ENCODE measurements at regions of chr1 and their contacts with region 1.

Region 1: DNA sequence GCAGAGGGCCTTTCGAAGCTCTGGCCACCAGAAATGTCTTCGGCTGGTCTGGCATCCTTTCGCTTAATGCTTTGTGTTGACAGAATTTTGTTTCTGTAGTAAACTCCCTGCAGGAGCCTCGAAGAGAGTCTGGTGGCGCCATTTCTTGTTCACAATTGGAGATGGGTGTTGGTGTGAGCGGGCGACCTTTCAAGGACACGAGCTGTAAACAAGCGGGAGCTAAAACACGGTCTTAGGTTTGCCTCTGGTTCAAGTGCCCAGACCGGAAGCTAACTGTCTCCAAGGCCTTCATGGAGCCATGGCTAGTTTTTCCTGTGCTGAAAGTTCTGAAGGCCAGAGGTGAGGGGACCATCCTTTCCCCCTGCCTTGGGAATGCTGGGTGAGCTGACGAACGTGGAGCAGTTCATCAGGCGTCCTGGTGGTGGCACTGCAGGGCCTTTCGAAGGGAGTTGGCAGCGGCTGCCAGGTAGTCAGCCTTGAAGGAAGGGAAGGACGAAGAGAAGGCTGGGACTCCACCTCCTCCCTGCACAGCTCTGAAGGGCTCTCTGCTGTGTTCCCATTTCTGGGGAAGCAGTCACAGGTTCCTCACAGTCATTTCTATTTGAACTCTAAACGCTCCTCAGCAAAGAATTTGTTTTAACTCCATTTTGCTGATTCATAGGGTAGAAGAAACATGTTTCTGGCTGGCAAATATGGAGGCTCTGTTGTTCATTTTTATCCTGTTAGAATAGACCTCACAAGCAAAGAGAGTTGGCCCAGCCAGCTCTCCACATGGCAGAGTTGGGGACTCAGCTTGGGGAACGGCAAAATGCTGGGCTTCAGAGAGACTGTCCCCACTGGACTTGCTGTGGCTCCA is 35.2 kb downstream of the URB2 start:
- DNase-seq: peak; percentile 64 to 79
- ATAC-seq: peak; percentile 86 to 94
- H3K4me3 ChIP-seq: no peak overlapping the region
- H3K27ac ChIP-seq: peak overlapping the region in 1 of 4 donors; percentile 12
- H3K4me1 ChIP-seq: peaks cover 0 to 7% of the 10 kb centered on the region in 2 donors
- H3K27me3 ChIP-seq: no peaks in the 10 kb centered on the region
- CTCF ChIP-seq: peak; percentile 84 to 93 (median 86)
- POLR2A ChIP-seq: no peak

Region 2: DNA sequence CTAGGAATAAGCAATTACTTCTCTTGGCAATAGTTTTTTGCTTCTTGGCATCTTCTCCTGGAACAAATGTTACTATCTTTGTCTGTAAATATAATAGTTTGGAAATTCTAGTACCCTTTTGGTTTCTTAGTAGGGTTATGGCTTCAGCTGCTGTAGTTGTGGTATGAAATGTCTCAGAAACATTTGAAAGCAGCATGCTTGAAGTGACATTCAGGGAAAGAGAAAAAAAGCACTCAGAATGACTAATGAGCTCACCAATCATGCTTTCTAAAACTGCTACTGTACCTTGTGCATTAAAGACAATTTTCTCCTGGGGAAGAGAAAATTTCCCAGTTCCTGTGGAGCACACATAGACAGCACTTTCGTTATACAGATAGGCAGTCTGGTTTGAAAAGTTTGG is 174.1 kb before region 1 on chr1:
- in situ Hi-C with region 1: no loop called
- intact Hi-C with region 1: no loop called
- DNase-seq: no peak
- ATAC-seq: no peak
- H3K4me3 ChIP-seq: no peak overlapping the region
- H3K27ac ChIP-seq: no peak overlapping the region
- H3K4me1 ChIP-seq: no peaks in the 10 kb centered on the region
- H3K27me3 ChIP-seq: no peaks in the 10 kb centered on the region
- CTCF ChIP-seq: no peak
- POLR2A ChIP-seq: no peak

Region 3: DNA sequence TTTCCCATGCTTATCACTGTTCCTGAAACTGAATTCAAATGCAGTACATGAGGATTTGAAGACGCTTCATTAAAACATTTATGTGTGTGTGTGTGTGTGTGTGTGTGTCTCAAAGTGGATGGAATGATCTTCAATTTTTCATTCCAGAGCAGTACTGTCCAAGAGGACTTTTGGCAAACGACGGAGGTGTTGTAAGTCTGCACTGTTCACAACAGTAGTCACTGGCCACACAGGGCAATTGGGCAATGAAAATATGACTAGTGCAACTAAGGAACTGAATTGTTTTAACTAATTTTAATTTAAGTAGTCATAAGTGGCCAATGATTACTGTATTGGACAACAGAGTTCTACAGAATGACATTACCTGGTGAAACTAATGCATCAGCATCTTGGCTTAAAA is 40.4 kb before region 1 on chr1:
- in situ Hi-C with region 1: no loop called
- intact Hi-C with region 1: no loop called
- DNase-seq: peak; percentile 48 to 64
- ATAC-seq: peak; percentile 47 to 55
- H3K4me3 ChIP-seq: no peak overlapping the region
- H3K27ac ChIP-seq: peak overlapping the region in 3 of 4 donors; percentile 22 to 95 (median 37)
- H3K4me1 ChIP-seq: peaks cover 45 to 54% of the 10 kb centered on the region in 2 donors
- H3K27me3 ChIP-seq: no peaks in the 10 kb centered on the region
- CTCF ChIP-seq: no peak
- POLR2A ChIP-seq: no peak

Region 4: GRCh38 chr1:229714964-229715603 is 53.8 kb after region 1 on chr1:
- in situ Hi-C with region 1: no loop called
- intact Hi-C with region 1: no loop called
- DNase-seq: no peak
- ATAC-seq: no peak
- H3K4me3 ChIP-seq: no peak overlapping the region
- H3K27ac ChIP-seq: no peak overlapping the region
- H3K4me1 ChIP-seq: no peaks in the 10 kb centered on the region
- H3K27me3 ChIP-seq: no peaks in the 10 kb centered on the region
- CTCF ChIP-seq: no peak
- POLR2A ChIP-seq: no peak

Region 5: DNA sequence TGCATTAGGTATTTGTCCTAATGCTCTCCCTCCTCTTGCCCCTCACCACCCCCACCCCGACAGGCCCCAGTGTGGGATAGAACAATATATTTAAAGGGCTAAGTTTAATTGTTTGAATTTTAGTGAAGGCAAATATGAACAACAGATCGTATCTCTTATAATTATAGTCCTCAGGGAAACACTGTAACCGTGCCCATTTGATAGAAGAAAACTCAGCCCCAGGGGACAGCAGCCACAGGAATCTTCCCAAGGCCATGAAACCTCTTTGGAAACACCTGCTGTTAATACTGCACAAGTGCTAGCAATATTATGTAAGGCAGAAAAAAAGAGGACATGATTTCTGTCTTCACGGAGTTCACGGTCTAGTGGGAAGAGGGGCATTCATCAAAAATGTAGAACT is 107.0 kb after region 1 on chr1:
- in situ Hi-C with region 1: no loop called
- intact Hi-C with region 1: no loop called
- DNase-seq: no peak
- ATAC-seq: no peak
- H3K4me3 ChIP-seq: no peak overlapping the region
- H3K27ac ChIP-seq: no peak overlapping the region
- H3K4me1 ChIP-seq: no peaks in the 10 kb centered on the region
- H3K27me3 ChIP-seq: no peaks in the 10 kb centered on the region
- CTCF ChIP-seq: no peak
- POLR2A ChIP-seq: no peak

Region 6: GRCh38 chr1:229979993-229980392 is 318.7 kb after region 1 on chr1:
- in situ Hi-C with region 1: loop called in 1 of 4 experiments (anchors 25 kb)
- intact Hi-C with region 1: no loop called
- DNase-seq: no peak
- ATAC-seq: no peak
- H3K4me3 ChIP-seq: no peak overlapping the region
- H3K27ac ChIP-seq: no peak overlapping the region
- H3K4me1 ChIP-seq: no peaks in the 10 kb centered on the region
- H3K27me3 ChIP-seq: no peaks in the 10 kb centered on the region
- CTCF ChIP-seq: no peak
- POLR2A ChIP-seq: no peak

Region 7: GRCh38 chr1:229999004-229999670 is 337.9 kb after region 1 on chr1:
- in situ Hi-C with region 1: loop called in 1 of 4 experiments (anchors 25 kb)
- intact Hi-C with region 1: loop called (anchors 10 kb)
- DNase-seq: no peak
- ATAC-seq: no peak
- H3K4me3 ChIP-seq: no peak overlapping the region
- H3K27ac ChIP-seq: peak overlapping the region in 2 of 4 donors; percentile 2 to 24
- H3K4me1 ChIP-seq: peaks cover 7 to 21% of the 10 kb centered on the region in 2 donors
- H3K27me3 ChIP-seq: no peaks in the 10 kb centered on the region
- CTCF ChIP-seq: no peak
- POLR2A ChIP-seq: no peak

Region 8: GRCh38 chr1:230073371-230074035 is 412.3 kb after region 1 on chr1:
- in situ Hi-C with region 1: no loop called
- intact Hi-C with region 1: loop called (anchors 5 kb)
- DNase-seq: peak; percentile 78 to 85
- ATAC-seq: peak; percentile 84 to 90
- H3K4me3 ChIP-seq: peak overlapping the region in 1 of 4 donors; percentile 26
- H3K27ac ChIP-seq: peak overlapping the region; percentile 95 to 97 (median 97)
- H3K4me1 ChIP-seq: peaks cover 89% of the 10 kb centered on the region in 2 donors
- H3K27me3 ChIP-seq: no peaks in the 10 kb centered on the region
- CTCF ChIP-seq: peak in 1 of 5 experiments; percentile 14
- POLR2A ChIP-seq: peak; percentile 48 to 84

Region 9: GRCh38 chr1:230310381-230311163 is 649.3 kb after region 1 on chr1:
- in situ Hi-C with region 1: loop called (anchors 5 to 10 kb)
- intact Hi-C with region 1: loop called (anchors 1 kb)
- DNase-seq: peak; percentile 42 to 67
- ATAC-seq: peak; percentile 85 to 91
- H3K4me3 ChIP-seq: no peak overlapping the region
- H3K27ac ChIP-seq: peak overlapping the region in 1 of 4 donors; percentile 40
- H3K4me1 ChIP-seq: peaks cover 0 to 8% of the 10 kb centered on the region in 2 donors
- H3K27me3 ChIP-seq: no peaks in the 10 kb centered on the region
- CTCF ChIP-seq: peak; percentile 87 to 93 (median 92)
- POLR2A ChIP-seq: no peak

Measured in gastrocnemius medialis (tissue), 4 donors.